WTC11 (cell line): ENCODE measurements at regions of chr19 and their contacts with region 1.

Region 1: GRCh38 chr19:41263850-41264580 is at the start of gene HNRNPUL1:
- DNase-seq: peak; percentile 98
- ATAC-seq: peak; percentile 83
- H3K4me3 Mint-ChIP-seq: peak within 1 kb of the TSS; percentile 95
- H3K27ac Mint-ChIP-seq: peak within 1 kb of the TSS; percentile 99
- H3K4me1 Mint-ChIP-seq: peaks cover 27% of the 10 kb centered on the region
- H3K27me3 Mint-ChIP-seq: no peaks in the 10 kb centered on the region; the same call in 1 of the 2 replicates
- CTCF ChIP-seq: no peak
- total RNA-seq, gene HNRNPUL1: 246 to 282 TPM (median 257 TPM) in 3 replicates

Region 2: GRCh38 chr19:41192574-41193429 is 71.2 kb before region 1 on chr19 and contains the start of gene CYP2S1:
- CTCF ChIA-PET with region 1: interaction called, 15 read pairs
- POLR2A ChIA-PET with region 1: interaction called, 4 read pairs
- DNase-seq: peak; percentile 78
- ATAC-seq: peak; percentile 65
- H3K4me3 Mint-ChIP-seq: peak within 1 kb of the TSS; percentile 93
- H3K27ac Mint-ChIP-seq: peak within 1 kb of the TSS; percentile 88
- H3K4me1 Mint-ChIP-seq: peaks cover 67% of the 10 kb centered on the region
- H3K27me3 Mint-ChIP-seq: no peaks in the 10 kb centered on the region
- CTCF ChIP-seq: no peak
- total RNA-seq, gene CYP2S1: 173 to 191 TPM (median 188 TPM) in 3 replicates

Region 3: DNA sequence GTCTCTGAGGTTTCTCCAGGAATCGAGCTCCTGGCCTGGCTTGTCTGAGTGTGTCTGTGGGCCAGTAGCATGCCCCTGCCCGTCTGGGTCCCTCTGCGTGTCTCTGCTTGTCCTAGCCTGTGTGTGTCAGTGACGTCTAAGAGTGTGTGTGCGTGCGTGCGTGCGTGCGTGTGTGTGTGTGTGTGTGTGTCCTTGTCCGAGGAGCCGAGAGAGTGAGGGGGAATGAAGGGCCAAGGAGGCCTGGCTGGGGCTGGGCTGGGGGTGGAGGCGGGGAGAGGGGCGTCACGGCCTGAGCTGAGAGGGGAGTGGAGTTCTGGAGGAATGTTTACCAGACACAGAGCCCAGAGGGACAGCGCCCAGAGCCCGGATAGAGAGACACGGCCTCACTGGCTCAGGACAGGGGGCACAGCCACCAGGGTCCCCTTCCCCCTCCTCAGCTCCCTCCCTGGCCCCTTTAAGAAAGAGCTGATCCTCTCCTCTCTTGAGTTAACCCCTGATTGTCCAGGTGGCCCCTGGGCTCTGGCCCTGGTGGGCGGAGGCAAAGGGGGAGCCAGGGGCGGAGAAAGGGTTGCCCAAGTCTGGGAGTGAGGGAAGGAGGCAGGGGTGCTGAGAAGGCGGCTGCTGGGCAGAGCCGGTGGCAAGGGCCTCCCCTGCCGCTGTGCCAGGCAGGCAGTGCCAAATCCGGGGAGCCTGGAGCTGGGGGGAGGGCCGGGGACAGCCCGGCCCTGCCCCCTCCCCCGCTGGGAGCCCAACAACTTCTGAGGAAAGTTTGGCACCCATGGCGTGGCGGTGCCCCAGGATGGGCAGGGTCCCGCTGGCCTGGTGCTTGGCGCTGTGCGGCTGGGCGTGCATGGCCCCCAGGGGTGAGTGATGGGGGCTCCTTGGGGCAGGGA is 45.2 kb before region 1 on chr19 and contains the start of gene AXL:
- CTCF ChIA-PET with region 1: interaction called, 24 read pairs
- POLR2A ChIA-PET with region 1: interaction called, 24 read pairs
- DNase-seq: peak; percentile 82
- ATAC-seq: peak; percentile 82
- H3K4me3 Mint-ChIP-seq: peak within 1 kb of the TSS; percentile 78
- H3K27ac Mint-ChIP-seq: peak within 1 kb of the TSS; percentile 68
- H3K4me1 Mint-ChIP-seq: peaks cover 44% of the 10 kb centered on the region
- H3K27me3 Mint-ChIP-seq: no peaks in the 10 kb centered on the region; the same call in 1 of the 2 replicates
- CTCF ChIP-seq: no peak
- total RNA-seq, gene AXL: 25.0 to 27.3 TPM (median 27.0 TPM) in 3 replicates

Region 4: GRCh38 chr19:41278478-41278877 is 14.5 kb after region 1 on chr19:
- CTCF ChIA-PET with region 1: interaction called, 10 read pairs
- POLR2A ChIA-PET with region 1: no interaction called
- DNase-seq: no peak
- ATAC-seq: no peak
- H3K4me3 Mint-ChIP-seq: no peak overlapping the region
- H3K27ac Mint-ChIP-seq: no peak overlapping the region
- H3K4me1 Mint-ChIP-seq: no peaks in the 10 kb centered on the region
- H3K27me3 Mint-ChIP-seq: no peaks in the 10 kb centered on the region
- CTCF ChIP-seq: no peak